ENCODE measurements at regions of chr17 and their contacts with region 1.

Region 1: GRCh38 chr17:40531051-40531991 is 29.9 kb upstream of the TNS4 start:
- DNase-seq: peak; percentile 59
- H3K4me3 Mint-ChIP-seq: peak overlapping the region; percentile 11
- H3K27ac Mint-ChIP-seq: peak overlapping the region; percentile 90
- H3K4me1 Mint-ChIP-seq: peaks cover 88% of the 10 kb centered on the region
- H3K27me3 Mint-ChIP-seq: peaks cover 2% of the 10 kb centered on the region

Region 2: DNA sequence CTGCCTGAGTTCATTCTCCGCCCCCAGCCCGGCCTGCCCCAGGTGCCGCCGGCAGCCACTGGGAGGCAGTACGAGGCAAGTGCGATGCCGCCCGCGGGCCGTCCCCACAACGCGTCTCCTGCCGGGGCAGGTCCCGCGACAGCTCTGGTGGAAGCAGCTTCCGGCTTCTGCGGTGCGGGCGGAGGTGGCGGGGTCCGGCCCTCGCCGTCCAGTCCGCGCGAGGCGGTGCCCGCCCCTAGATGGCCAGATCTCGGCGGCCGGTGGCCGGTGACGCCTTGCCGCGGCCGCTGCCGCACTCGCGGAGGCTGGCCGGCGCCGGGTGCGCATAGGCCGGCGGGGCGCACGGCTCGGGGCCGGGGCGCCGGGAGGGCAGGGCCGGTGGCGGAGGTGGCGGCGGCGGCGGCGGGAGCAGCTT is 168.6 kb before region 1 on chr17:
- CTCF ChIA-PET with region 1: interaction called, 47 read pairs
- POLR2A ChIA-PET with region 1: interaction called, 9 read pairs
- DNase-seq: peak; percentile 91
- H3K4me3 Mint-ChIP-seq: peak overlapping the region; percentile 77
- H3K27ac Mint-ChIP-seq: no peak overlapping the region
- H3K4me1 Mint-ChIP-seq: peaks cover 41% of the 10 kb centered on the region
- H3K27me3 Mint-ChIP-seq: peaks cover 12% of the 10 kb centered on the region

Region 3: DNA sequence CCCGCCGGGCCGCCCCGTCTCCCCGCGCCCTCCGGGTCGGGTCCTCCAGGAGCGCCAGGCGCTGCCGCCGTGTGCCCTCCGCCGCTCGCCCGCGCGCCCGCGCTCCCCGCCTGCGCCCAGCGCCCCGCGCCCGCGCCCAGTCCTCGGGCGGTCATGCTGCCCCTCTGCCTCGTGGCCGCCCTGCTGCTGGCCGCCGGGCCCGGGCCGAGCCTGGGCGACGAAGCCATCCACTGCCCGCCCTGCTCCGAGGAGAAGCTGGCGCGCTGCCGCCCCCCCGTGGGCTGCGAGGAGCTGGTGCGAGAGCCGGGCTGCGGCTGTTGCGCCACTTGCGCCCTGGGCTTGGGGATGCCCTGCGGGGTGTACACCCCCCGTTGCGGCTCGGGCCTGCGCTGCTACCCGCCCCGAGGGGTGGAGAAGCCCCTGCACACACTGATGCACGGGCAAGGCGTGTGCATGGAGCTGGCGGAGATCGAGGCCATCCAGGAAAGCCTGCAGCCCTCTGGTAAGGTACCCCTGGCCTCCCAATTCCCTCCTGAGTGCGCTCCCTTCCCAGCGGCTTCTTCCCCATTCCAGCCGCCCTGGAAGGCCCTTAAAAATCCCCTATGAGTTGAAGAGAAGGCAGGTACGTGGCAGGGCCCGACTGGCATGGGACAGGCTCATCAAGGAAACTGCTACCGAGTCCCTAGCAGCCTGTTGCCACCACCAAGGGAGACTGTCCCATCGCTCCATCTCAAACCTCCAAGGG is 87.6 kb before region 1 on chr17:
- CTCF ChIA-PET with region 1: interaction called, 15 read pairs
- POLR2A ChIA-PET with region 1: interaction called, 3 read pairs
- DNase-seq: peak; percentile 71
- H3K4me3 Mint-ChIP-seq: peak overlapping the region; percentile 85
- H3K27ac Mint-ChIP-seq: peak overlapping the region; percentile 97
- H3K4me1 Mint-ChIP-seq: peaks cover 70% of the 10 kb centered on the region
- H3K27me3 Mint-ChIP-seq: peaks cover 9% of the 10 kb centered on the region

Region 4: GRCh38 chr17:40480501-40481003 is 50.8 kb before region 1 on chr17:
- CTCF ChIA-PET with region 1: interaction called, 23 read pairs
- POLR2A ChIA-PET with region 1: interaction called, 4 read pairs
- DNase-seq: peak; percentile 92
- H3K4me3 Mint-ChIP-seq: peak overlapping the region; percentile 43
- H3K27ac Mint-ChIP-seq: peak overlapping the region; percentile 98
- H3K4me1 Mint-ChIP-seq: peaks cover 95% of the 10 kb centered on the region
- H3K27me3 Mint-ChIP-seq: no peaks in the 10 kb centered on the region

Region 5: DNA sequence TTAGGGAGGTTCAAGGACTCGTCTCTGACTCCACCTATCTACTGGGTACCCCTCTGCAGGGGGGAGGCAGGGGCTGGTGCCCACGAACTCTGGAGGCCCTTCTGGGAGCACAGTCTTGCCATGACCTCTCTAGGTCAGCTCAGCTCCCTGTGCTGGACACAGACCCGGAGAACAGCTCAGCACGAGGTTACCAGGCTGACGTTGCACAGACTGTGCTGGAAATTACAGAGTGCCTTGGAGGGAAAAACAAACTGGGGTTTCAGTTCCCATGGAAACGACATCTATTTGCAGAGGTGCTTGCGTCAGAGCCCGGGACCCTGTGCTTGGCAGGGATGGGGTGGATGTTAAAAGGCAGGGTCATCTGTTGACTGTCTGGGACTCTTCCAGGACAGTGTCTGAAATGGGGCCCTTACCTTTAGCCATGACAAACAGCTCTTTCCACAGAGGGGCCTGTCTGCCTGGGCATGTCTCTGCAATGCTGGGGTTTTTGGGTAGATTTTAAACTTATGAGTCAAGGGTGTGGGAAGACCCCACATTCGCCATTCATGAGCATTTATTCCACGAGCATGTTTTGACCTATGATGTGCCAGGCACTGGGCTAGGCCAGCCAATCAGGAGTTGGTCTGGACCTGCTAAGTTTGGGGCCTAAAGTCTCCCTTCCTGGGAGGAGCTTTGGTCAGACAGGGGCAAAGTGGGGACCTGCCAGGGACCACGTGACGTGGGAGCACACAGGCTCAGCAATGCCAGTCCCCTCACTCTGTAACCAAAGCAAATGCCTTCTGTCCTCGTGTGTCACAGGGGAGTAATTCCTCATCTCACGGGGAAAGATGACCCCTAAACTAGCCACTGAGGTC is 11.5 kb after region 1 on chr17:
- CTCF ChIA-PET with region 1: interaction called, 41 read pairs
- POLR2A ChIA-PET with region 1: no interaction called
- DNase-seq: no peak
- H3K4me3 Mint-ChIP-seq: no peak overlapping the region
- H3K27ac Mint-ChIP-seq: peak overlapping the region; percentile 82
- H3K4me1 Mint-ChIP-seq: peaks cover 83% of the 10 kb centered on the region
- H3K27me3 Mint-ChIP-seq: no peaks in the 10 kb centered on the region

Measured in activated CD4-positive, alpha-beta T cell treated with anti-CD3 and anti-CD28 coated beads, Interleukin-2, amount 10 ng/mL, durations not matched to agents 7 days and 5 days (primary cell).